ENCODE measurements at regions of chr18 and their contacts with region 1.

Region 1: GRCh38 chr18:51857989-51858388 is 482.0 kb upstream of the DCC start:
- DNase-seq: no peak
- ATAC-seq: no peak
- H3K4me3 ChIP-seq: no peak overlapping the region
- H3K27ac ChIP-seq: no peak overlapping the region
- H3K4me1 ChIP-seq: no peaks in the 10 kb centered on the region
- H3K27me3 ChIP-seq: no peaks in the 10 kb centered on the region

Region 2: DNA sequence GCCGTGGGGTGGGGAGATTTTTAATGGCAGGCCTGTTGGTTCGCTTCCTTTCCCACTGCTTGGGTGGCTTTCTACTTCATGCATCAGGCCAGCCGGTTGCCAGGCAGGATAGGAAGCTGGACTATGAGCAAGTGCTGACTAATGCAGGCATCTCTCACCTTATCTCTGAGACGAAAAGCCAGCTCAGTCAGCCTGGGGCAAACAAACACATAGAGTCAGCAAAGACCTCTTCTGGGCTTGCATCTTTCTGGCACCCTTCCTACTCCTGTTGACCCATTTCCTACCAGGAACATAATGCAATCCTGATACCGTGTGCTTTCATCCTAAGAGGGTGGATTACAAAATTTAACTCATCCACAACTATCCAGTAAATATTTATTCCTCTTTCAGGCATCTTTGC is 244.0 kb before region 1 on chr18:
- intact Hi-C with region 1: no loop called
- DNase-seq: no peak
- ATAC-seq: no peak
- H3K4me3 ChIP-seq: no peak overlapping the region
- H3K27ac ChIP-seq: no peak overlapping the region
- H3K4me1 ChIP-seq: no peaks in the 10 kb centered on the region
- H3K27me3 ChIP-seq: peaks cover 0 to 2% of the 10 kb centered on the region in 2 donors

Region 3: GRCh38 chr18:51751901-51752300 is 106.1 kb before region 1 on chr18:
- intact Hi-C with region 1: loop called in 1 of 2 experiments (anchors 10 kb)
- DNase-seq: no peak
- ATAC-seq: no peak
- H3K4me3 ChIP-seq: no peak overlapping the region
- H3K27ac ChIP-seq: no peak overlapping the region
- H3K4me1 ChIP-seq: no peaks in the 10 kb centered on the region
- H3K27me3 ChIP-seq: no peaks in the 10 kb centered on the region